ENCODE measurements at regions of chr1 and their contacts with region 1.

Region 1: GRCh38 chr1:23403735-23404486 is 20.6 kb downstream of the TCEA3 start:
- DNase-seq: peak; percentile 95

Region 2: DNA sequence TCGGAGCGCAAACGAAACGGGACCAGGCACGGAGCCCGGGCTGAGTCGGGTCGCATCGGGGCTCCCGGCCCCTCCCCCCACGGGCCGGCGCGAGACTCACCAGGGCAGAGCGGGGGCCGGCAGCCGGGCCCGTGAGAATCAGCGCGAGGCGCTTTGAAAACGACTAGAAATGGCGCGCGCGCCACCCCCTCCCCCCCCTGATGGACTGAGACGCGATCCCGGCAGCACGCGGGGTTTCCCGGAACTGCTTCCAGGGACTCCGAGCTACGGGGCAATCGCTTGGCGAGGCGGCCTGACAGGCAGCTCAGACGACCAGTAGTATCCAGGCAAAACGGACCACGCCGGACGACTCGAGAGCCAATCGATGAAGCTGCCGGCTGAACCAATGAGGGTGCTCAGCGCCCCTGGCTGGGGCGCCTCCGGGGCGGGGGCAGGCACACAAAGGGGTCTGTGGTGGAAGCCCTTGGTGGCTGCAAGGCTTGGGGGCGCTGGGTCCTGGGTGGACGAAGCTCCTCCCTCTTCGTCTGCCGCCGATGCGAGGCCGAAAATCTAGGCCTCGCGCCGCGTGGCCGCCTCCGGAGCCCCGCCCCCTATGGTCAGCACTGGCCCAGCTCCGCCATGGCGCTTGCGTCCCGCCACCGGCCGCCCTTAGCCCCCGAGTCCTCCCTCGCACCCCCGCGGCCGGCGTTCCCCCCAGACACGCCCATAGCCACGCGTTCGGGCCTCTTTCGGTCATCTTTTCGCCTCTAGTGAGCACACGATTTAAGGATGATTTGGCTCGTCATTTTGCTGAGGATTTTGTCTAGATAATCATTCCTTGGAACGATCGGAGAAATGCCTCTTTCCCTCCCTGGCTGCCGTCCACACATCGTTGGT is 59.6 kb before region 1 on chr1 and contains the start of gene HNRNPR:
- intact Hi-C with region 1: loop called in 1 of 2 experiments (anchors 10 kb)
- DNase-seq: peak; percentile 100
- total RNA-seq, gene HNRNPR: 95.1 to 117 TPM